Activated CD8-positive, alpha-beta memory T cell treated with anti-CD3 and anti-CD28 coated beads, Interleukin-2, amount 10 ng/mL, durations not matched to agents 7 days and 5 days (primary cell): ENCODE measurements at regions of chr11 and their contacts with region 1.

Region 1: DNA sequence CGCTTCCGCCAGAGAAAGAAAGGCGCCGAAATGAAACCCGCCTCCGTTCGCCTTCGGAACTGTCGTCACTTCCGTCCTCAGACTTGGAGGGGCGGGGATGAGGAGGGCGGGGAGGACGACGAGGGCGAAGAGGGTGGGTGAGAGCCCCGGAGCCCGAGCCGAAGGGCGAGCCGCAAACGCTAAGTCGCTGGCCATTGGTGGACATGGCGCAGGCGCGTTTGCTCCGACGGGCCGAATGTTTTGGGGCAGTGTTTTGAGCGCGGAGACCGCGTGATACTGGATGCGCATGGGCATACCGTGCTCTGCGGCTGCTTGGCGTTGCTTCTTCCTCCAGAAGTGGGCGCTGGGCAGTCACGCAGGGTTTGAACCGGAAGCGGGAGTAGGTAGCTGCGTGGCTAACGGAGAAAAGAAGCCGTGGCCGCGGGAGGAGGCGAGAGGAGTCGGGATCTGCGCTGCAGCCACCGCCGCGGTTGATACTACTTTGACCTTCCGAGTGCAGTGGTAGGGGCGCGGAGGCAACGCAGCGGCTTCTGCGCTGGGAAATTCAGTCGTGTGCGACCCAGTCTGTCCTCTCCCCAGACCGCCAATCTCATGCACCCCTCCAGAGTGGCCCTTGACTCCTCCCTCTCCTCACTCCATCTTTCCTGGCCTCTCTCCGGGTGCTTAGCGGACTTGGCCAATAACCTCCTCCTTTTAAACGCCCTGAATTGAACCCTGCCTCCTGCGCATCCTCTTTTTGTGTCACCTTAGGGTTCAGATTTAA is at the start of gene ATM:
- DNase-seq: peak; percentile 99
- ATAC-seq: peak; percentile 86
- H3K4me3 Mint-ChIP-seq: no peak within 1 kb of the TSS
- H3K27ac Mint-ChIP-seq: no peak within 1 kb of the TSS
- H3K4me1 Mint-ChIP-seq: peaks cover 41% of the 10 kb centered on the region
- H3K27me3 Mint-ChIP-seq: no peaks in the 10 kb centered on the region
- total RNA-seq, gene ATM: 84.3 to 113 TPM

Region 2: GRCh38 chr11:108237058-108237481 is 14.2 kb after region 1 on chr11:
- CTCF ChIA-PET with region 1: interaction called, 26 read pairs
- DNase-seq: no peak
- ATAC-seq: peak; percentile 34
- H3K4me3 Mint-ChIP-seq: peak overlapping the region; percentile 23
- H3K27ac Mint-ChIP-seq: peak overlapping the region; percentile 68
- H3K4me1 Mint-ChIP-seq: peaks cover 49% of the 10 kb centered on the region
- H3K27me3 Mint-ChIP-seq: peaks cover 2% of the 10 kb centered on the region

Region 3: DNA sequence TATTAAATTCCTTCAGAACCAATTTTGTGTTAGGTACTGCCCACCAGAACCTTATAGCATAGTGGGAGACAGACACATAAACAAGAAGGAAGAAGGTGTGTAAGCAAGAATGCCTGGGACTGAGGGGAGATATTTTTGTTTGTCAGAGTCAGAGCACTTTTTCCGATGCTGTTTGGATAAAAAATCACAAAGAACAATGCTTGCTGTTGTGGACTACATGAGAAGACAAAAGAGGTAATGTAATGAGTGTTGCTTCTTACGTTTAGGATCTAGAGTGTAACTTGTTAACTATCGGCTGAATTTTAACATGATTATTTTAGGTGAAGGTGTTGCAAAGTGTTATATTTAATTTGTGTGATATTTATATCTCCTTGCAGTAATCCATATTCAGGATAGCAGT is 84.9 kb after region 1 on chr11:
- CTCF ChIA-PET with region 1: no interaction called
- DNase-seq: no peak
- ATAC-seq: no peak
- H3K4me3 Mint-ChIP-seq: no peak overlapping the region
- H3K27ac Mint-ChIP-seq: no peak overlapping the region
- H3K4me1 Mint-ChIP-seq: peaks cover under 1% of the 10 kb centered on the region
- H3K27me3 Mint-ChIP-seq: no peaks in the 10 kb centered on the region